ENCODE measurements at regions of chr3 and their contacts with region 1.

Region 1: DNA sequence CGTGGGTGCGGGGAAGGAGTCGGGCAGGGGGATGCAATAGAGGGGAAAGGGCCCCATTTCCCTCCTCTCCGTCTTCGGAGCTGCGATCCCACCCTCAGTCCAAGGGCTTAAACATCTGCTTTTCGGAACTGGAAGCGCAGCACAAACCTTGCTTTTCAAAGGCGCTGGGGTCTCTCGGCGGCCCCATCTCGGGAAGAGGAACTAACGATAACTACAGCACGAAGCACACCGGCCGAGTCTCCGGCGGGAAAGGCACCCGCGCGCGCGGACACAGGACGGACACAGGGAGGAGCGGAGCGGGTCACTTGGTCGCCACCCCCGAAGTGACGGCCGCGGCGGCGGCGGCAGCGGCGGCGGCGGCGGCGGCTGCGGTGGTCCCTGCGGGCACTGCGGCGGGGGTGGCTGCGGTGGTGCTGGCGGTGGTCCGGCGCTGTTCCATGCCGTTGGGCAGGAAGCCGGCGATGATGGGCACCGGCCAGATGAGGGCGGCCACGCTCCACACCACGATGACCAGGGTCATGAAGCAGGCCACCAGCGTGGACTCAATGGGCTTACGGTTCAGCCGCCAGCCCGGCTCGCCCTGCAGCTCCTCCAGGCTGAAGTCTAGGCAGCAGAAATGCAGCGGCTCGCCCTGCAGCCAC is 1.1 kb downstream of the TMEM158 start:
- DNase-seq: peak; percentile 71
- H3K4me3 Mint-ChIP-seq: peak overlapping the region; percentile 83
- H3K27ac Mint-ChIP-seq: peak overlapping the region; percentile 78
- H3K4me1 Mint-ChIP-seq: peaks cover 12% of the 10 kb centered on the region
- H3K27me3 Mint-ChIP-seq: peaks cover 74% of the 10 kb centered on the region

Region 2: GRCh38 chr3:45043728-45044299 is 181.1 kb before region 1 on chr3:
- intact Hi-C with region 1: loop called (anchors 1 kb)
- DNase-seq: no peak
- H3K4me3 Mint-ChIP-seq: no peak overlapping the region
- H3K27ac Mint-ChIP-seq: no peak overlapping the region
- H3K4me1 Mint-ChIP-seq: peaks cover 24% of the 10 kb centered on the region
- H3K27me3 Mint-ChIP-seq: peaks cover 29% of the 10 kb centered on the region

Region 3: GRCh38 chr3:45167011-45167911 is 57.7 kb before region 1 on chr3:
- intact Hi-C with region 1: loop called (anchors 1 kb)
- DNase-seq: peak; percentile 95
- H3K4me3 Mint-ChIP-seq: peak overlapping the region; percentile 76
- H3K27ac Mint-ChIP-seq: peak overlapping the region; percentile 96
- H3K4me1 Mint-ChIP-seq: peaks cover 41% of the 10 kb centered on the region
- H3K27me3 Mint-ChIP-seq: peaks cover 6% of the 10 kb centered on the region

Region 4: GRCh38 chr3:45283471-45283870 is 58.5 kb after region 1 on chr3:
- intact Hi-C with region 1: no loop called
- DNase-seq: no peak
- H3K4me3 Mint-ChIP-seq: no peak overlapping the region
- H3K27ac Mint-ChIP-seq: no peak overlapping the region
- H3K4me1 Mint-ChIP-seq: no peaks in the 10 kb centered on the region
- H3K27me3 Mint-ChIP-seq: peaks cover 39% of the 10 kb centered on the region

Region 5: GRCh38 chr3:45499529-45499928 is 274.6 kb after region 1 on chr3:
- intact Hi-C with region 1: loop called (anchors 5 kb)
- DNase-seq: no peak
- H3K4me3 Mint-ChIP-seq: no peak overlapping the region
- H3K27ac Mint-ChIP-seq: no peak overlapping the region
- H3K4me1 Mint-ChIP-seq: peaks cover 3% of the 10 kb centered on the region
- H3K27me3 Mint-ChIP-seq: no peaks in the 10 kb centered on the region

Region 6: DNA sequence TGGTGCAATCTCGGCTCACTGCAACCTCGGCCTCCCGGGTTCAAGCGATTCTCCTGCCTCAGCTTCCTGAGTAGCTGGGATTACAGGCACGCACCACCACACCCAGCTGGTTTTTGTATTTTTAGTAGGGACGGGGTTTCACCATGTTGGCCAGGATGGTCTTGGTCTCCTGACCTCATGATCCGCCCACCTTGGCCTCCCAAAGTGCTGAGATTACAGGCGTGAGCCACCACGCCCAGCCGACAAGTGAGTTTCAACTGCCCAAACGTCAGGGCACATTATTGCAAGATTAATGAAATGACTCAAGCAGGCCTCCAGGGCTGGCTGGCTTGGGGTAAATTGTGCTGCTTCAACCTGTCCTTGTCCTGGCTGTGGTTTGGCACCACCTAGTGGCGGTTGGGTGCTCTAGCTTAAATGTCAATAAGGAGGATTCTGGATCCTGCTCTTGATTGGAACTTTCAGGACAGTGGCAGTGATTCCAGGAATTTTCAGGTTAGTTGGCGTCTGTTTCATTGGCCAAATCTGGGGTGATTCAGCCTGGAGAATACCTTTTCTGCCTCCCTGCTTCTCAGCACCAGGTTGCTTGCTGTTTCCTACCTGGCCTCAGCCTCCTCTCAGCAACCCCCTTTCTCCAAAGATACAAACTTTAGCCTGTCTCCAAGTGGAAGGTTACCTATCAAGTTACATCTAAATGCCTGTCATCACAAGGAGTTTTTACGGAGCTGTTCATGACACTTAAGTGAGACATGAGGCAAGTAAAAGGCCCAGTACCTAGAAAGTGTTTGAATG is 431.8 kb after region 1 on chr3:
- intact Hi-C with region 1: loop called (anchors 10 kb)
- DNase-seq: peak; percentile 94
- H3K4me3 Mint-ChIP-seq: no peak overlapping the region
- H3K27ac Mint-ChIP-seq: no peak overlapping the region
- H3K4me1 Mint-ChIP-seq: peaks cover 13% of the 10 kb centered on the region
- H3K27me3 Mint-ChIP-seq: no peaks in the 10 kb centered on the region

Region 7: GRCh38 chr3:45688882-45689756 is 464.2 kb after region 1 on chr3 and contains the start of gene SACM1L:
- intact Hi-C with region 1: loop called (anchors 2 kb)
- DNase-seq: peak; percentile 99
- H3K4me3 Mint-ChIP-seq: peak within 1 kb of the TSS; percentile 87
- H3K27ac Mint-ChIP-seq: peak within 1 kb of the TSS; percentile 94
- H3K4me1 Mint-ChIP-seq: peaks cover 46% of the 10 kb centered on the region
- H3K27me3 Mint-ChIP-seq: peaks cover 4% of the 10 kb centered on the region
- total RNA-seq, gene SACM1L: 88.0 and 91.7 TPM in 2 replicates

Region 8: GRCh38 chr3:46395210-46395731 is 1170.3 kb after region 1 on chr3:
- intact Hi-C with region 1: no loop called
- DNase-seq: no peak
- H3K4me3 Mint-ChIP-seq: no peak overlapping the region
- H3K27ac Mint-ChIP-seq: no peak overlapping the region
- H3K4me1 Mint-ChIP-seq: peaks cover 18% of the 10 kb centered on the region
- H3K27me3 Mint-ChIP-seq: peaks cover 17% of the 10 kb centered on the region

Measured in activated CD4-positive, alpha-beta T cell treated with anti-CD3 and anti-CD28 coated beads, Interleukin-2, amount 10 ng/mL, durations not matched to agents 24 days and 14 days (primary cell).